Activated B cell treated with CpG ODN at 0.5 μM for 24 hours (primary cell): ENCODE measurements at regions of chr2 and their contacts with region 1.

Region 1: DNA sequence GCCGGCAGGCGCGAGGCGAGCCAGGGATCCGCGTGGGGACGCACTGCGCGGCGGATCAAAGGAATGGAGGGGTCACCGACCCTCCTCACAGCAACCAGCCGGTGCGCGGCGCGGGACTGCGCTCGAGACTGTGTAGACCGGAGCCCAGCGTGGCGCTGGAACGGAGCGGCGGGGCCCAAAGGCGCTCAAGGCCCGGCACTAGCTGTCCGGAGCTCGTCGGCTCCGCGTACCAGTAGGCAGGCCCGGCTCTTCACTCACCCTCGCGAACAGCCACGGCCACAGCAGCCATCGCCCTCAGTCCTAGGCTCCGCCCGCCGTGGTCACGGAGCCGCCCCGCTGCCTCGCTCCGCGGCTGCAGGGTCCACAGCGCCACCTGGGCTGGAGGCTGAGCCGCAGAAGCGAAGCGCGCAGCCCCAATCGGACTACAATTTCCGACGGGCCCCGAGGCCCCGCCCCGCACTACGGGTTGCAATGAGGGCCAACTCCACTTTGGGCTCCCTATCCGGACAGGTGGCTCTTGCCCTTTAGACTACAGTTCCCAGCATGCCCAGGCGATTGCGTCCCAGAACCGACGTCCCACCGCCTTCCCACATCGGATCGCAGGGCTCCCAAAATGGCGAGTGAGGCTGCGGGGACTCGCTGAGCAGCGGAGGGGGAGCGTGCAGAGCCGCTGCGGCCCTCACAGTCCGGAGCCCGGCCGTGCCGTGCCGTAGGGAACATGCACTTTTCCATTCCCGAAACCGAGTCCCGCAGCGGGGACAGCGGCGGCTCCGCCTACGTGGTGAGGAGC is at the starts of genes EIF2B4 and SNX17:
- DNase-seq: peak; percentile 99
- ATAC-seq: peak; percentile 83
- H3K4me3 Mint-ChIP-seq: peak within 1 kb of the TSS; percentile 94
- H3K27ac Mint-ChIP-seq: peak within 1 kb of the TSS; percentile 98
- H3K4me1 Mint-ChIP-seq: peaks cover 35% of the 10 kb centered on the region
- H3K27me3 Mint-ChIP-seq: no peaks in the 10 kb centered on the region
- CTCF ChIP-seq: no peak
- total RNA-seq, gene EIF2B4: 43.3 and 49.9 TPM in 2 replicates
- total RNA-seq, gene SNX17: 124 and 128 TPM in 2 replicates

Region 2: DNA sequence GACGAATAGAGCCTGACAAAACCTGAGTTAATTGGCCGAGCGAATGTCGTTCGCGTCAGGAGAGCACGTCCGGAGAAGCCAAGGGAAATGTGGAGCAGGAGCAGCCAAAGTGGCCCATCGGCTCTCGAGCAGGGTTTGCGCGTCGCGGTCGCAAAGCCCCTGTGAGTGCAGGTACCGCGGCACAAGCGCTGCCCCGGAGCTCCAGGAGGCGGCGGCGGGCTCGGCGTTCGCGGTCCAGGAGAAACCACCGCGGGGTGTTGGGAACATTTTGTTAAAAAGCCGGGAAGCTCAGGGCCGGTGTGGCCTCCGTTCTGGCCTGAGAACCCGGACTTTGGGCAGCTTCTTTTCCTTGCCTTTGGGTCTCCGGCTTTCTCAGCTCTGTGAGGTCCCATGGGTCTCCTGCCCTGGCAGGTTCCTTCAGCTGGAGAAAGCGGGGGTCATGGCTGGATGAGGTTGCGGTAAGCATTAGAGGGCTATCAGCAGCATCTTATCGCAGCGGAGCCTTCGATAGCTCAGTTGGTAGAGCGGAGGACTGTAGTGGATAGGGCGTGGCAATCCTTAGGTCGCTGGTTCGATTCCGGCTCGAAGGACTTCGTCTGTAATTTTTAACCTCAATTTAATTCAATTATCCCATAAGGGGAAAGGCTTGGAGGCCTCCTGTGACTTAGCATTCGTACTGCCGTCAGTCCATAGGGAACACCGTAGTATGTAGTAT is 319.8 kb before region 1 on chr2:
- CTCF ChIA-PET with region 1: interaction called, 3 read pairs
- POLR2A ChIA-PET with region 1: interaction called, 6 read pairs
- intact Hi-C with region 1: loop called (anchors 1 kb)
- DNase-seq: peak; percentile 91
- ATAC-seq: peak; percentile 60
- H3K4me3 Mint-ChIP-seq: peak overlapping the region; percentile 97
- H3K27ac Mint-ChIP-seq: peak overlapping the region; percentile 100
- H3K4me1 Mint-ChIP-seq: peaks cover 19% of the 10 kb centered on the region
- H3K27me3 Mint-ChIP-seq: peaks cover 6% of the 10 kb centered on the region
- CTCF ChIP-seq: no peak

Region 3: DNA sequence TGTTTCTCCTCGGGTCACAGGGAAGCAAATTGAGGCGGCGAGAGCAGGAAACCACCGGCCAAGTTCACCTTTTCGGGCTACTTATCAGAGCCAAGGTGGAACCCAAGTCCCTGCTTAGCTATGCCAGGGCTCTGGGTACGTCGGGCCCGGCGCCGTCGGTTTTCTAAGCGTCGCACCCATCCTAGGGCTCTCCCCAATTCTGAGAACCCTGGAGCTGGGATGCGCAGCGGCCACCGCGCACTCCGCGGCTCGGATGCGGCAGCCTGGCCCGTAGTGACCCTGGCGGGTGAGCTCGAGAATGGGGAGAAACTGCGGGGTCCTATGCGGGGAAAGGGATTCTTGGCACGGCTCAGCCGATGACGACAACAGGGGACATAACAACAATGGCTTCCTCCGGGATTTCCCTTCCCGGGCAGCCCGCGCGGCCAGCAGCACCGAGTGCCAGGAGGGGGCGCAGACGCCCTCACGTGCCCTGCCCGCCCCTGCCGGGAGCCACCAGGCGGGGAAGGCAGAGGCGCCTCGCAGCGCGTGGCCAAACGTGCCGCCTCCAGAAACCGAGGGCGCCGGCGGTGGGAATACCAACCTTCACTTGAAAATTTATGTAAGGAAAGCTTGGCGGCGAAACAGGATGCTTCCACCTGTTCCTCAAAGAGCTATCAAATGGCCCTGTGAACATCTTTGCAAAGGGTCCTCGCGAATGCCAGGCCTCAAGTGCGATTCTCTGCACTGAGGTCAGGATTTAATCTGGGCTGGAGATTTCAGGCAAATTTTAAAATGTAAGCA is 105.3 kb before region 1 on chr2:
- CTCF ChIA-PET with region 1: no interaction called
- POLR2A ChIA-PET with region 1: no interaction called
- intact Hi-C with region 1: loop called (anchors 1 kb)
- DNase-seq: peak; percentile 68
- ATAC-seq: peak; percentile 73
- H3K4me3 Mint-ChIP-seq: peak overlapping the region; percentile 88
- H3K27ac Mint-ChIP-seq: no peak overlapping the region
- H3K4me1 Mint-ChIP-seq: peaks cover 33% of the 10 kb centered on the region
- H3K27me3 Mint-ChIP-seq: peaks cover 44% of the 10 kb centered on the region
- CTCF ChIP-seq: no peak

Region 4: GRCh38 chr2:27303093-27304025 is 66.9 kb before region 1 on chr2:
- CTCF ChIA-PET with region 1: no interaction called
- POLR2A ChIA-PET with region 1: no interaction called
- intact Hi-C with region 1: no loop called
- DNase-seq: no peak
- ATAC-seq: peak; percentile 75
- H3K4me3 Mint-ChIP-seq: peak overlapping the region; percentile 72
- H3K27ac Mint-ChIP-seq: no peak overlapping the region
- H3K4me1 Mint-ChIP-seq: peaks cover 11% of the 10 kb centered on the region
- H3K27me3 Mint-ChIP-seq: peaks cover 23% of the 10 kb centered on the region
- CTCF ChIP-seq: peak; percentile 61

Region 5: GRCh38 chr2:27380626-27381545 is 10.7 kb after region 1 on chr2 and contains the start of gene ZNF513:
- CTCF ChIA-PET with region 1: interaction called, 6 read pairs
- POLR2A ChIA-PET with region 1: interaction called, 96 read pairs
- intact Hi-C with region 1: loop called (anchors 1 kb)
- DNase-seq: peak; percentile 85
- ATAC-seq: peak; percentile 91
- H3K4me3 Mint-ChIP-seq: peak within 1 kb of the TSS; percentile 87
- H3K27ac Mint-ChIP-seq: peak within 1 kb of the TSS; percentile 89
- H3K4me1 Mint-ChIP-seq: peaks cover 29% of the 10 kb centered on the region
- H3K27me3 Mint-ChIP-seq: no peaks in the 10 kb centered on the region
- CTCF ChIP-seq: no peak
- total RNA-seq, gene ZNF513: 30.1 and 32.8 TPM in 2 replicates

Region 6: GRCh38 chr2:27441958-27442919 is 72.0 kb after region 1 on chr2 and contains the start of gene KRTCAP3:
- CTCF ChIA-PET with region 1: interaction called, 3 read pairs
- POLR2A ChIA-PET with region 1: no interaction called
- intact Hi-C with region 1: loop called (anchors 5 kb)
- DNase-seq: peak; percentile 68
- ATAC-seq: peak; percentile 98
- H3K4me3 Mint-ChIP-seq: peak within 1 kb of the TSS; percentile 52
- H3K27ac Mint-ChIP-seq: peak within 1 kb of the TSS; percentile 30
- H3K4me1 Mint-ChIP-seq: peaks cover 13% of the 10 kb centered on the region
- H3K27me3 Mint-ChIP-seq: no peaks in the 10 kb centered on the region
- CTCF ChIP-seq: no peak
- total RNA-seq, gene KRTCAP3: 6.3 and 10.0 TPM in 2 replicates

Region 7: GRCh38 chr2:27527182-27527581 is 157.0 kb after region 1 on chr2:
- CTCF ChIA-PET with region 1: no interaction called
- POLR2A ChIA-PET with region 1: no interaction called
- intact Hi-C with region 1: no loop called
- DNase-seq: no peak
- ATAC-seq: no peak
- H3K4me3 Mint-ChIP-seq: no peak overlapping the region
- H3K27ac Mint-ChIP-seq: no peak overlapping the region
- H3K4me1 Mint-ChIP-seq: no peaks in the 10 kb centered on the region
- H3K27me3 Mint-ChIP-seq: peaks cover 32% of the 10 kb centered on the region
- CTCF ChIP-seq: no peak

Region 8: GRCh38 chr2:27628767-27629709 is 258.8 kb after region 1 on chr2 and contains the starts of genes CCDC121 and GPN1:
- CTCF ChIA-PET with region 1: no interaction called
- POLR2A ChIA-PET with region 1: interaction called, 18 read pairs
- intact Hi-C with region 1: loop called (anchors 2 kb)
- DNase-seq: peak; percentile 85
- ATAC-seq: peak; percentile 99
- H3K4me3 Mint-ChIP-seq: no peak within 1 kb of the TSS
- H3K27ac Mint-ChIP-seq: peak within 1 kb of the TSS; percentile 69
- H3K4me1 Mint-ChIP-seq: peaks cover 12% of the 10 kb centered on the region
- H3K27me3 Mint-ChIP-seq: no peaks in the 10 kb centered on the region
- CTCF ChIP-seq: no peak
- total RNA-seq, gene CCDC121: 0.69 and 0.71 TPM in 2 replicates
- total RNA-seq, gene GPN1: 36.9 and 39.3 TPM in 2 replicates